Sigmoid colon (tissue), 7 donors: ENCODE measurements at regions of chr2 and their contacts with region 1.

Region 1: GRCh38 chr2:25521665-25522387 is 151.6 kb downstream of the DTNB start:
- DNase-seq: no peak
- H3K4me3 ChIP-seq: peak overlapping the region in 3 of 4 donors; percentile 28 to 43 (median 33)
- H3K27ac ChIP-seq: peak overlapping the region in 1 of 4 donors; percentile 45
- H3K4me1 ChIP-seq: peaks cover 0 to 28% (median 14%) of the 10 kb centered on the region in 4 donors
- H3K27me3 ChIP-seq: no peaks in the 10 kb centered on the region
- CTCF ChIP-seq: peak; percentile 70 to 84 (median 80)
- EP300 ChIP-seq: no peak
- POLR2A ChIP-seq: no peak

Region 2: DNA sequence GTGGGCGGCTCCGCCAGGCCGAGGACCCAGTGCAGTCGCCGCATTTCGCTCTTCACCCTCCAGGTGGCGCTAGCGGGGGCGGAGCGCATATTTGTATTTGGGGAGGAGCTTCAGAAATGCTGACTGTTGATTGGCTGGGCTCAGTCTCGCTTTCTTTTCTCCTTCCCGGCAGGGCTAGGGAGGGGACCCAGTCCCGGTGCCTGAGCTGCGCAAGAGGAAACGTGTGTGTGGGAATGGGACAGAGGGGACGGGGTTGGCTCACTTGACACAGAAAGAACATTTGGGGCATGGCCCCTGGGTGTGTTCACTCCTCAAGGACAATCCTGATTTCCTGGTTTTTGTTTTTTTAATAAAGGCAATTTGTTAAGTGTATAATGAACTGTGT is 159.8 kb before region 1 on chr2:
- intact Hi-C with region 1: loop called (anchors 5 kb)
- DNase-seq: peak; percentile 96
- H3K4me3 ChIP-seq: peak overlapping the region; percentile 17 to 48 (median 44)
- H3K27ac ChIP-seq: peak overlapping the region; percentile 35 to 78 (median 69)
- H3K4me1 ChIP-seq: peaks cover 0 to 11% (median 10%) of the 10 kb centered on the region in 4 donors
- H3K27me3 ChIP-seq: no peaks in the 10 kb centered on the region
- CTCF ChIP-seq: peak; percentile 70 to 98 (median 90)
- EP300 ChIP-seq: no peak
- POLR2A ChIP-seq: peak; percentile 62 to 68

Region 3: GRCh38 chr2:25376750-25377621 is 144.8 kb before region 1 on chr2:
- intact Hi-C with region 1: loop called (anchors 5 kb)
- DNase-seq: peak; percentile 93
- H3K4me3 ChIP-seq: peak overlapping the region in 3 of 4 donors; percentile 7 to 33 (median 31)
- H3K27ac ChIP-seq: peak overlapping the region; percentile 45 to 71 (median 52)
- H3K4me1 ChIP-seq: peaks cover 0 to 14% (median 13%) of the 10 kb centered on the region in 4 donors
- H3K27me3 ChIP-seq: no peaks in the 10 kb centered on the region
- CTCF ChIP-seq: peak; percentile 44 to 94 (median 72)
- EP300 ChIP-seq: no peak
- POLR2A ChIP-seq: no peak

Region 4: DNA sequence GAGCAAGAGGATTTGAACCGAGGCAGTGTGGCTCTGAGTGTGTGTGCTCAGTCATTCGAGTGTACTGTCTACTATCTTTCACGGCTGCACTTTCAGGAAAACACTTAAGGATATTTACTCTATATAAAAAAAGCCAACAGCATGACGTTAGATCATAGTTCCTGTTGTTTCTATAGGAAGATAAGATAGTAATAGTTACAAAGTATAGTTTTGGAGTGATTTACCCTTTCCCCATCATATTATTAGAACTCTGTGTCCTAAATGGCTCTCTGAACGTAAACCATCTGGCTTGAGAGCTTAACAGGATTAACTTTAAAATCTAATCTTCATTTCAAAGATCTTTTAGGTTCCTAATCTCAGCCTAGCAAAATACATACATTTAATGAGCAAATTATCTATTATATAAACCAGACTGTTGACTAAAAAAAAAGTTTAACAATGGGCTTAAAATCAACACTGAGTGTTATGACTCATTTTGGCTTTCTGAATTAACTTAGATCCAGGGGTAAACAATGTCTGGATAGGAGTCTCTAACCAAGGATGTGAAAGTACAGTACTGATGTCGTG is 29.8 kb before region 1 on chr2:
- intact Hi-C with region 1: no loop called
- DNase-seq: no peak
- H3K4me3 ChIP-seq: no peak overlapping the region
- H3K27ac ChIP-seq: no peak overlapping the region
- H3K4me1 ChIP-seq: peaks cover 0 to 16% (median 6%) of the 10 kb centered on the region in 4 donors
- H3K27me3 ChIP-seq: no peaks in the 10 kb centered on the region
- CTCF ChIP-seq: no peak
- EP300 ChIP-seq: no peak
- POLR2A ChIP-seq: no peak

Region 5: GRCh38 chr2:25618642-25619037 is 96.8 kb after region 1 on chr2:
- intact Hi-C with region 1: no loop called
- DNase-seq: no peak
- H3K4me3 ChIP-seq: no peak overlapping the region
- H3K27ac ChIP-seq: peak overlapping the region in 1 of 4 donors; percentile 53
- H3K4me1 ChIP-seq: peaks cover 0 to 5% (median 0%) of the 10 kb centered on the region in 4 donors
- H3K27me3 ChIP-seq: no peaks in the 10 kb centered on the region
- CTCF ChIP-seq: no peak
- EP300 ChIP-seq: no peak
- POLR2A ChIP-seq: no peak